ENCODE measurements at regions of chr1 and their contacts with region 1.

Region 1: DNA sequence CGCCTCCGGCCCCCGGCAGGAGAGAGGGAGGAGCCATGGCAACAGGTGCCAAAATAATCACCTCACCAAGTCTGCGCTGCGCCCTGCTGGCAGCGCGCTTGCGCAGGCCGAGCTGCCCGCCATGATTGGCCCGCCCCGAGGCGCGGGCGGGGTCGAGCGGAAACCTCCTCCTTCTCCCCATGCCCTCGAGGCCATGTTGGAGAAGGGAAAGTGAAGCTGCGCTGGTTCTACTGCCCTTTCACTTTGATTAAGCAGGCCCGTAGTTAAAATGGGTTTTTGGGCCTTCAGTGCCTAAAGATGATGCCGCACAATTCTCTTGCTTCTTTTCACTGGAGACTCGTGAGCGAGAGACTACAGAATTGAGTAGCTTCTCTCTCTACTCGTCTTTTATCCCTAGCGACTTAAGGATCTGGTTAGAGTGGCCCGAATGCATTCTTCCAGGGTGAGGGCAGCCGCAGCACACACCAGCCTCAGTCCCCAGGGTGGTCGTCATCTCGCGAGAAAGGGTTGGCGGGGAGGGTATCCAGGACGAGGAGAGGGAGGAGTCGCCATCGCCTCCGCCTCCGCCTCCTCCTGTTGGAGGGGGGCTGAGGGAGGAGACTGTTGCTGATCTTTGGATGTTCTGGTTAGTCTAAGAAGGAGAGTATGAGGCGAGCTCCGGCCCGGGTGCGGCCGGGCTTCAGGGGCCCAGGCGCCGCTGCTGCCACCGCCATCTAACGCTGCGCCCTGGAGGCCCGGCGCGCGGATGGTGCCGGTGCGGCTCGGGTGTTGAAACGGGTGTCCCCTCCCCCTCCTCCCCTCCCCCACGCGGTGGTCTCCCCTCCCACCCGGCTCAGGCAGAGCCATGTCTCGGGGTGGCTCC is at the start of gene DCAF6:
- DNase-seq: peak; percentile 96
- H3K4me3 ChIP-seq: peak within 1 kb of the TSS; percentile 85 to 90
- H3K27ac ChIP-seq: peak within 1 kb of the TSS; percentile 95 to 98
- H3K4me1 ChIP-seq: no peaks in the 10 kb centered on the region
- H3K27me3 ChIP-seq: no peaks in the 10 kb centered on the region
- CTCF ChIP-seq: peak in 2 of 4 experiments; percentile 17 to 38
- POLR2A ChIP-seq: peak; percentile 94
- total RNA-seq, gene DCAF6: 71.4 to 116 TPM

Region 2: GRCh38 chr1:166603247-166603646 is 1333.1 kb before region 1 on chr1:
- intact Hi-C with region 1: no loop called
- DNase-seq: no peak
- H3K4me3 ChIP-seq: no peak overlapping the region
- H3K27ac ChIP-seq: no peak overlapping the region
- H3K4me1 ChIP-seq: no peaks in the 10 kb centered on the region
- H3K27me3 ChIP-seq: no peaks in the 10 kb centered on the region
- CTCF ChIP-seq: no peak
- POLR2A ChIP-seq: no peak

Region 3: GRCh38 chr1:167594822-167595221 is 341.5 kb before region 1 on chr1:
- intact Hi-C with region 1: no loop called
- DNase-seq: no peak
- H3K4me3 ChIP-seq: no peak overlapping the region
- H3K27ac ChIP-seq: no peak overlapping the region
- H3K4me1 ChIP-seq: no peaks in the 10 kb centered on the region
- H3K27me3 ChIP-seq: no peaks in the 10 kb centered on the region
- CTCF ChIP-seq: no peak
- POLR2A ChIP-seq: no peak

Region 4: GRCh38 chr1:167721617-167722151 is 214.6 kb before region 1 on chr1 and contains the start of gene MPZL1:
- intact Hi-C with region 1: loop called (anchors 5 kb)
- DNase-seq: peak; percentile 97
- H3K4me3 ChIP-seq: peak within 1 kb of the TSS; percentile 92 to 98
- H3K27ac ChIP-seq: peak within 1 kb of the TSS; percentile 85 to 88
- H3K4me1 ChIP-seq: no peaks in the 10 kb centered on the region
- H3K27me3 ChIP-seq: no peaks in the 10 kb centered on the region
- CTCF ChIP-seq: peak in 1 of 4 experiments; percentile 19
- POLR2A ChIP-seq: peak; percentile 86
- total RNA-seq, gene MPZL1: 52.5 to 135 TPM

Region 5: GRCh38 chr1:168035345-168035744 is 99.0 kb after region 1 on chr1:
- intact Hi-C with region 1: no loop called
- DNase-seq: no peak
- H3K4me3 ChIP-seq: no peak overlapping the region
- H3K27ac ChIP-seq: no peak overlapping the region
- H3K4me1 ChIP-seq: no peaks in the 10 kb centered on the region
- H3K27me3 ChIP-seq: no peaks in the 10 kb centered on the region
- CTCF ChIP-seq: no peak
- POLR2A ChIP-seq: no peak

Region 6: DNA sequence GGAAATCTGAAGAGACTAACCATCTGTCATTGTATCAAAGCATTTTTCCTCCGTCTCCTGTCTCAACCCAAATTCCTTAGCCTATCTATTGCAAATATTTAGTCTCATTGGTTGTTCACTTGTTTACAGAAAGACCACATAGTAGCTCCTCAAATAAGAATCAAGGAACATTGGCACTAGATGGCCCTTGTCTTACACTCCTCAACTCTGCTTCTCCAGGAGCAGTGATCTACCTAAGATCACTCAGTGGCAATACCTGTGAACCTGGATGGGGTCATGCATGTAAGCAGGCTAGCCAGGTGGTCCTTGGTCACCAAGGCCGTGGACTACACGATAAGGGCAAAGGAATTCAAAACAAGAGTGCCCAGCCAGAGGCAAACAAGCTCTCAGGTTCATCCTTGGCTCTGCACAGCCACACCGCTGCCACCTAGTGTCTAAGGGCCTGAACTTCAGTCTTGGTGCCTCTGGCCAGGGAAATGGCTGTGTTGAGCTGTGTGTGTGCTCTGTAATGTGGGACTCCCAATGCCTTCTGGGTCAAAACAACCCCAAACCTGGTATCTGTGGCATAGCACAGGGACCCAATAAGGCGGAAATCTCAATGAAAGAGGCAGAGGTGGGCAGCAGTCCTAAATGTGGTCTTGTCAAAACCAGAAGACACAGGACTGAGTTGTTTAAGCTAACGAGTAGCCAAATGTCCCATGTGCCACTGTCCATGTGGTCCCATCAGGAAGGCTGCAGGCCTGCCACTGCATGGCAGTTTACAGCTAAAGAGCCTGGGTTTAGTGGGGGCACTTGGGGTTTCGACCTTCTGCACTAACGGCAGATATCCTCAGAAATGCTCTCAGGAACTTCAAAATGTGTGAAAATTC is 145.9 kb after region 1 on chr1:
- intact Hi-C with region 1: loop called (anchors 5 kb)
- DNase-seq: peak; percentile 61
- H3K4me3 ChIP-seq: no peak overlapping the region
- H3K27ac ChIP-seq: peak overlapping the region; percentile 9 to 20
- H3K4me1 ChIP-seq: no peaks in the 10 kb centered on the region
- H3K27me3 ChIP-seq: no peaks in the 10 kb centered on the region
- CTCF ChIP-seq: peak; percentile 70 to 82 (median 76)
- POLR2A ChIP-seq: no peak

Region 7: DNA sequence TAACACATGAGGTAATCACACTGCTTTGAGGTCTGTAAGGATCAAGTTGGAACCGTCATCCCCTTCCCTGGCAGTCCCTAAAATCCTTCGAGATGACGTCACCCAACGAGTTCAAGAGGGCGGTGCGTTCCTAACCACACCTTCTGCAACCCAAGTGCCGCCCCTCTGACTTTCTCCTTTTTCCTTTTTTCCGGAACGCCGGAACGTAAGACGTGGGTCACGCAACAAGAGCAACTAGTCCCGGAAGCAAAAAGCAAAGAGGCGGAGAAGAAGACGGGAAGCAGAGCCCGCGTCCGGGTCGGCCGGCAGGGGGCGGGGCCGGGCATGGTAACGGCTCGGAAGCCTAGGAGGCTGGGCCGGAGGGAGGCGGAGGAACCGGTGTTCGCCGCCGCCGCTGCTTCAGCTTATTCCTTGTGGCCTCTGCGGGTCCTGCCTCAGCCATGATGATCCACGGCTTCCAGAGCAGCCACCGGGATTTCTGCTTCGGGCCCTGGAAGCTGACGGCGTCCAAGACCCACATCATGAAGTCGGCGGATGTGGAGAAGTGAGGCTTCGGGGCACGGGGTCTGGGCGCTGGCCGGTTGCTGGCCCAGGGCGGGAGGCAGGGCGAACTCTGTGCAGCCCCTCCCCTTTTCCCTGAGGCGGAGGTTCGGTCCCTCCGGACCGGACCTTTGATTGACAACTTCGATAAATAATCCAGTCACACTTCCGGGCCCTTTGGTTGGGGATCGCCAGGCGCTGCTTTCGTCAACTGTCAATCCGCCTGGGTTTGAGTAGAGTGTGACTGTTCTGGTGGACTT is 242.5 kb after region 1 on chr1 and contains the start of gene TIPRL:
- intact Hi-C with region 1: loop called (anchors 2 kb)
- DNase-seq: peak; percentile 93
- H3K4me3 ChIP-seq: peak within 1 kb of the TSS; percentile 67 to 69
- H3K27ac ChIP-seq: peak within 1 kb of the TSS; percentile 86 to 87
- H3K4me1 ChIP-seq: peaks cover 7% of the 10 kb centered on the region
- H3K27me3 ChIP-seq: no peaks in the 10 kb centered on the region
- CTCF ChIP-seq: peak; percentile 74 to 88 (median 78)
- POLR2A ChIP-seq: peak; percentile 74
- total RNA-seq, gene TIPRL: 14.2 to 29.9 TPM

Measured in prostate gland (tissue), 2 donors.